Heart right ventricle (tissue), 16 donors: ENCODE measurements at regions of chr6 and their contacts with region 1.

Region 1: GRCh38 chr6:17469006-17469832 is 75.8 kb downstream of the CAP2 start:
- DNase-seq: no peak
- ATAC-seq: no peak
- H3K4me3 ChIP-seq: no peak overlapping the region
- H3K27ac ChIP-seq: no peak overlapping the region
- H3K4me1 ChIP-seq: peaks cover 0 to 31% (median 11%) of the 10 kb centered on the region in 9 donors
- H3K27me3 ChIP-seq: no peaks in the 10 kb centered on the region
- CTCF ChIP-seq: peak in 7 of 9 donors; percentile 16 to 49 (median 38)

Region 2: DNA sequence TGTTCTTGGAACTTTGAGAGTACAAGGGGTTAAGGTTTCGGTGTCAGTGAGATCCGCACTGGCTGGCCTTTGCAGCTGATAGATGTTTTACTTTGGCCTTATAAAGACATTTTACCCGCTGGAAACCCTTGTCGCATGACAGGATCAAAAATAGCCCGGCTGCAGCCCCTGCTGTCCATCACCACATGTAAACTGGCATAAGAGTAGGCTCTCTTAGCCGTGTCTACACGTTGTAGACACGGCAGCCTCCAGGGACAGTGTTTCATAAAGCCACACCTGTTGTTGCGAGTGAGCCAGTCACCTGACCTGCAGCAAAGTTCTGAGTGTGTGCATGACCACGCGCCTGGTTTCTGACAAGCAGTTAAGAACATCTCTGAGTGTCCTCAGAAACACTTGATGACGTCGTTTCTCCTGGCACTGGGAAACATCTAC is 179.6 kb before region 1 on chr6:
- intact Hi-C with region 1: loop called in 2 of 10 experiments (anchors 5 to 10 kb)
- DNase-seq: peak; percentile 51 to 79
- ATAC-seq: peak; percentile 79 to 95 (median 89)
- H3K4me3 ChIP-seq: peak overlapping the region in 8 of 10 donors; percentile 2 to 44 (median 32)
- H3K27ac ChIP-seq: peak overlapping the region; percentile 58 to 94 (median 82)
- H3K4me1 ChIP-seq: peaks cover 0 to 62% (median 6%) of the 10 kb centered on the region in 9 donors
- H3K27me3 ChIP-seq: peaks cover 0 to 11% (median 0%) of the 10 kb centered on the region in 7 donors
- CTCF ChIP-seq: no peak

Region 3: DNA sequence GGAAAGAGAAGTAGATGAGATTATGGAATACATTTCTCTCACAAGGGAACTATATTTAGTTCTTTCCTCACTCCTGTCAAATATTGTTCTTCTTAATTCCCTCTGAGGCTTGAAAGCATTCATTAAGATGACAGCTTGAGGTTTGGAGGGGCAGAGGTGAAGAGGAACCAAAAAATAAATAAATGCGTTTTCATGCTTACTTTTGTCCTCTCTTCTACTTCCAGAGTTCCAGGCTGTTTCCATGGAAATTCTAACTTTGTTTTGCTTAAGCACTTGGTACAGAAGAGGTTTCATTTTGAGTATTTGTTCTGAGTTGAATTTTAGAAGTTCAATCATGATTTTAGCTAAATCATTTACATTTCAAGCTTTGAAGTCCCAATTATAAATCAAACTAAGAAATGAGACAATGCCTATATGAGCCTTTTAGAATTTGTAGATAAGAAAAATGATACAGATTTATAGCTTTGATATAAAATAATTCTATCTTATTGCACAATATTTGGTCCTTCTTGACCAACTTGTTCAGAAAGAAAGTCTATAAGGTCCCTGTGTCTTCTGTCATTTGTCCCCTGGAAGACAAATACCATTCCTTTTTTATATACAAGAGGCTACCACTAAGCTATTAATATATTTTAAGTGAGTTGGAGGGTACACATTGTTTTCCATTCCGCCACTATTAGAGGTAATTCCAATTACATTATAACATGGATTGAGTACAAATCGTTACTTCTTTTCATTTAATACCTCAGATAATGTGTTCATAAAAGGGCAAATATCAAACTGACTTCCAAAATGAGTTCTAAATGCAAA is 171.7 kb before region 1 on chr6:
- intact Hi-C with region 1: loop called in 1 of 10 experiments (anchors 5 kb)
- DNase-seq: no peak
- ATAC-seq: peak in 3 of 8 donors; percentile 28 to 72 (median 47)
- H3K4me3 ChIP-seq: no peak overlapping the region
- H3K27ac ChIP-seq: peak overlapping the region in 8 of 10 donors; percentile 4 to 55 (median 28)
- H3K4me1 ChIP-seq: peaks cover 0 to 34% (median 8%) of the 10 kb centered on the region in 9 donors
- H3K27me3 ChIP-seq: no peaks in the 10 kb centered on the region
- CTCF ChIP-seq: no peak